ENCODE measurements at regions of chr3 and their contacts with region 1.

Region 1: DNA sequence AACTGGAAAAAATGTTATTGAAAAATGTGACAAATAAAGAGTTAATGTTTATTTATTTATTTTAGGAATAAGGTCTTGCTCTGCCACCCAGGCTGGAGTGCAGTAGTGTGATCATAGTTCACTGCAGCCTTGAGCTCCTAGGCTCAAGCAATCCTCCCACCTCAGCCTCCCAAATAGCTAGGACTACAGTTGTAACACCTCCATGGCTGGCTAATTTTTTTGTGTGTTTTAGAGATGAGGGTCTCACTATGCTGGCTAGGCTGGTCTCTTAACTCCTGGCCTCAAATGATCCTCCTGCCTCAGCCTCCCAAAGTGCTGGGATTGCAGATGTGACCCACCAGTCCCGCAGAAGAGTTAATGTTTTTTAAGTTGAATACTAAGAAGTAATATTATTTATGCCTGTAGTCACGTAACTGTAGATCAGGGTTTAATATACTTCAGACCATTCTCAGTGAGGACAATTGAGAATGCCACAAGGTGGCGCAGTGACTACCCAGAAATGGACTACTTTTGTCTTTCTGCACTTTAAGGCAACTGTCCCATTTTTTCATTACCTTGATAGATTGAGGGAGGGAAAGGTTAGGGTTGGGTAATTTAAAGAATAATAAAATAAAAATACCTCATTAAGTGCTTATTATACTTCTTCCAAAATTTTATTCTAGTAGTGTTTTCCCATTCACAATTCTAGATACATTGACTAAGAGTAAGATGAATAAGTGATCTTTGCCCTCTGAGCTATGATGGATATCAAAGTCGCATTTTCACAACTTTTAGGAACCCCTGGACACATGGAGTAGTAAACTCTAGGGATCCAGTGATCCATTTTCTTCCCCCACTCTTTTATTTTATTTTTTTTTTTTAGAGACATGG is 6.0 kb downstream of the MUC13 start:
- DNase-seq: peak; percentile 70
- H3K4me3 Mint-ChIP-seq: no peak overlapping the region
- H3K27ac Mint-ChIP-seq: no peak overlapping the region
- H3K4me1 Mint-ChIP-seq: no peaks in the 10 kb centered on the region
- H3K27me3 Mint-ChIP-seq: peaks cover 3% of the 10 kb centered on the region

Region 2: DNA sequence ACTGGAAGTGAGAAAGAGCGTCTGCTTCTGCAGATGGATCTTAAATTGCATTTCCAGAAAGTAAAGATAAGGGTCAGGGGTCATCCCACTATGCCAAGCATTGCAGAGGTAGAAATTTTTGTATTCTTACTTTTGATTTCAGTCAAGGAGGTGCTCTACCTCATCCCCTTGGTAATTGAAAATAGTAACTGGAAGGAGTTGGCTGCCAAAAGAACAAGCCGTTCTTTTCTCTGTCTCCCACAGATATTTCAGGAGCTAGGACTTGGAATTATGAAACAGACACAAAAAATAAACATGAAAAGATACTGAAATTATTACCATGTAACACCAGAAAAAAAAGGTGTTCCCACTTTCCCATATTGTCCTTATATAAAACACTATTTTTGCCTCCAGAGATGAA is 508.2 kb before region 1 on chr3:
- CTCF ChIA-PET with region 1: no interaction called
- POLR2A ChIA-PET with region 1: no interaction called
- intact Hi-C with region 1: no loop called
- DNase-seq: no peak
- H3K4me3 Mint-ChIP-seq: no peak overlapping the region
- H3K27ac Mint-ChIP-seq: no peak overlapping the region
- H3K4me1 Mint-ChIP-seq: no peaks in the 10 kb centered on the region
- H3K27me3 Mint-ChIP-seq: no peaks in the 10 kb centered on the region

Region 3: GRCh38 chr3:124938896-124939295 is 10.3 kb after region 1 on chr3:
- CTCF ChIA-PET with region 1: interaction called, 12 read pairs
- POLR2A ChIA-PET with region 1: no interaction called
- intact Hi-C with region 1: no loop called
- DNase-seq: no peak
- H3K4me3 Mint-ChIP-seq: no peak overlapping the region
- H3K27ac Mint-ChIP-seq: no peak overlapping the region
- H3K4me1 Mint-ChIP-seq: no peaks in the 10 kb centered on the region
- H3K27me3 Mint-ChIP-seq: peaks cover 7% of the 10 kb centered on the region

Region 4: GRCh38 chr3:125011941-125012340 is 83.4 kb after region 1 on chr3:
- CTCF ChIA-PET with region 1: no interaction called
- POLR2A ChIA-PET with region 1: no interaction called
- intact Hi-C with region 1: no loop called
- DNase-seq: no peak
- H3K4me3 Mint-ChIP-seq: no peak overlapping the region
- H3K27ac Mint-ChIP-seq: no peak overlapping the region
- H3K4me1 Mint-ChIP-seq: peaks cover 7% of the 10 kb centered on the region
- H3K27me3 Mint-ChIP-seq: no peaks in the 10 kb centered on the region

Measured in activated CD4-positive, alpha-beta memory T cell treated with anti-CD3 and anti-CD28 coated beads for 36 hours (primary cell).